Caco-2 (cell line): ENCODE measurements at regions of chr7 and their contacts with region 1.

Region 1: DNA sequence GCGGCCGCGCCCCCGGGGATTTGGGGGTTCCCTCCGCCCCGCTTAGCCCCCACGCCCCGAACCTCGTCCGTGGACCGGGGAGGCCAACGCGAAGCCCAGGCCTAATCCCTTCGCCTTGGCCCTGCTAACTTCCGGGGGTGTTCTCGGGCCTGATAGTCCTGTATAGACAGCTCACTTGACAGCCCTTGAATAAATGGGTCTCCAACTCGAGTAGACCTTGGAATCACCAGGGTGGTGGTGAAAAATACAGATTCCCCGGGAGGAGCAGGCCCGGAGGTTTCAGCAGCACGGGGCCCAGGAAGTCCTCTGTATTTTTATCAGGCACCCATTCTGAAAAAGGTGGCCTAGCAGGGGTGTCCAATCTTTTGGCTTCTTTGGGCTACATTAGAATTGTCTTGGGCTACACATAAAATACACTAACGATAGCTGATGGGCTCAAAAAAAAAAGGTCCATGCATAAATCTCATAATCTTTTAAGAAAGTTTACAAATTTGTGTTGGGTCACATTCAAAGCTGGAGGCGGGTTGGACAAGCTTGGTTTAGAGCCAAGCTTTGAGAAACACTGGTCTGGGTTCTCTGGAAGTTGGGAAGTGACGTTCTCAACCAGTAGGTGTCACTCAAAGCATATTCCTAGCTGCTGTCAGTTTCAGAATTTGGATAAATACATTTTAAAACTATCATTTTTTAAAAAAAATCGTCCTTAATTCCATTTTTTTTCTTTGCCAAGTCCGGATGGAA is 221.7 kb downstream of the PHTF2 start:
- DNase-seq: peak; percentile 56 to 65
- H3K4me3 ChIP-seq: peak overlapping the region; percentile 54
- H3K4me3 Mint-ChIP-seq: peak overlapping the region; percentile 84
- H3K27ac Mint-ChIP-seq: peak overlapping the region; percentile 77
- H3K4me1 ChIP-seq: peaks cover 14% of the 10 kb centered on the region
- H3K4me1 Mint-ChIP-seq: peaks cover 11% of the 10 kb centered on the region
- H3K27me3 ChIP-seq: no peaks in the 10 kb centered on the region
- H3K27me3 Mint-ChIP-seq: peaks cover 3% of the 10 kb centered on the region
- CTCF ChIP-seq: peak; percentile 60 to 77

Region 2: GRCh38 chr7:77657427-77658224 is 362.7 kb before region 1 on chr7:
- CTCF ChIA-PET with region 1: no interaction called
- POLR2A ChIA-PET with region 1: no interaction called
- intact Hi-C with region 1: loop called (anchors 10 kb)
- DNase-seq: peak in 1 of 2 experiments; percentile 59
- H3K4me3 ChIP-seq: no peak overlapping the region
- H3K4me3 Mint-ChIP-seq: no peak overlapping the region
- H3K27ac Mint-ChIP-seq: no peak overlapping the region
- H3K4me1 ChIP-seq: peaks cover 10% of the 10 kb centered on the region; the same call in 1 of the 2 replicates
- H3K4me1 Mint-ChIP-seq: peaks cover 18% of the 10 kb centered on the region
- H3K27me3 ChIP-seq: no peaks in the 10 kb centered on the region
- H3K27me3 Mint-ChIP-seq: no peaks in the 10 kb centered on the region
- CTCF ChIP-seq: peak; percentile 64 to 72

Region 3: GRCh38 chr7:78080811-78081210 is 60.5 kb after region 1 on chr7:
- CTCF ChIA-PET with region 1: interaction called, 3 read pairs
- POLR2A ChIA-PET with region 1: no interaction called
- intact Hi-C with region 1: loop called (anchors 2 kb)
- DNase-seq: no peak
- H3K4me3 ChIP-seq: no peak overlapping the region
- H3K4me3 Mint-ChIP-seq: no peak overlapping the region
- H3K27ac Mint-ChIP-seq: no peak overlapping the region
- H3K4me1 ChIP-seq: peaks cover 14% of the 10 kb centered on the region; the same call in 1 of the 2 replicates
- H3K4me1 Mint-ChIP-seq: no peaks in the 10 kb centered on the region
- H3K27me3 ChIP-seq: no peaks in the 10 kb centered on the region
- H3K27me3 Mint-ChIP-seq: peaks cover 5% of the 10 kb centered on the region
- CTCF ChIP-seq: no peak

Region 4: GRCh38 chr7:78226059-78226719 is 205.9 kb after region 1 on chr7:
- CTCF ChIA-PET with region 1: no interaction called
- POLR2A ChIA-PET with region 1: no interaction called
- intact Hi-C with region 1: loop called (anchors 1 kb)
- DNase-seq: peak in 1 of 2 experiments; percentile 58
- H3K4me3 ChIP-seq: no peak overlapping the region
- H3K4me3 Mint-ChIP-seq: no peak overlapping the region
- H3K27ac Mint-ChIP-seq: no peak overlapping the region
- H3K4me1 ChIP-seq: no peaks in the 10 kb centered on the region
- H3K4me1 Mint-ChIP-seq: no peaks in the 10 kb centered on the region
- H3K27me3 ChIP-seq: no peaks in the 10 kb centered on the region
- H3K27me3 Mint-ChIP-seq: peaks cover 10% of the 10 kb centered on the region
- CTCF ChIP-seq: peak; percentile 29 to 41

Region 5: GRCh38 chr7:78434281-78434680 is 414.0 kb after region 1 on chr7:
- CTCF ChIA-PET with region 1: no interaction called
- POLR2A ChIA-PET with region 1: no interaction called
- intact Hi-C with region 1: loop called (anchors 1 kb)
- DNase-seq: peak in 1 of 2 experiments; percentile 16
- H3K4me3 ChIP-seq: no peak overlapping the region
- H3K4me3 Mint-ChIP-seq: no peak overlapping the region
- H3K27ac Mint-ChIP-seq: no peak overlapping the region
- H3K4me1 ChIP-seq: no peaks in the 10 kb centered on the region
- H3K4me1 Mint-ChIP-seq: peaks cover 3% of the 10 kb centered on the region
- H3K27me3 ChIP-seq: no peaks in the 10 kb centered on the region
- H3K27me3 Mint-ChIP-seq: peaks cover 2% of the 10 kb centered on the region
- CTCF ChIP-seq: peak; percentile 13 to 54

Region 6: DNA sequence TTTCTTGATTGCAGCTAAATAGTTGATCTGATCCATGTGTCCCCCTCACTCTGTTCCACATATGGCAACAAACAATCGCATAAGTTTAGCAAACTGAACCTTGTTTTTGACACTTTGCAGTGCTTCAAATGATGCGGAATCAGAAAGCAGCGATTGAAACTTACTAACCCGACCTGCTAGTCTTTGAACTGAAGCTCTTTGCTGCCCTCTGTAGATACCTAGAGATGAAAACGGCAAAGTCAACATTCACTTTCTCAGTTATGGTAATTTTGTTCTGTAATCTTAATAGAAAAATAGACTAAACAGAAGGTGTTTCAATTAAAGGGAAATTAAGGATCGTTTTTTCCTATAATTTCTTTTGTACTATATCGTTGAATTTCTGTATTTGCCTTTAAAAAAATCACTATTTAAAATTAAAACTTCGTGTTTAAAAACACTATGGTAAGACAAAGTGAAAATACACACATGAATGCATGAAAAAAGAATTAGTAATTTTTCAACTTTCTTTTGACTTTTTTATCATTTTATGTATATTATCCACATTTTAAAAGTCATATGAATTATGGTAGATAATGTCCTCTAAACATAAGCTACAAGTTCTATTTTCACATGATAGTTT is 1156.7 kb after region 1 on chr7:
- CTCF ChIA-PET with region 1: no interaction called
- POLR2A ChIA-PET with region 1: no interaction called
- intact Hi-C with region 1: loop called (anchors 1 kb)
- DNase-seq: peak in 1 of 2 experiments; percentile 42
- H3K4me3 ChIP-seq: no peak overlapping the region
- H3K4me3 Mint-ChIP-seq: no peak overlapping the region
- H3K27ac Mint-ChIP-seq: no peak overlapping the region
- H3K4me1 ChIP-seq: no peaks in the 10 kb centered on the region; the same call in 1 of the 2 replicates
- H3K4me1 Mint-ChIP-seq: peaks cover 7% of the 10 kb centered on the region
- H3K27me3 ChIP-seq: no peaks in the 10 kb centered on the region
- H3K27me3 Mint-ChIP-seq: no peaks in the 10 kb centered on the region
- CTCF ChIP-seq: peak; percentile 66 to 72